ENCODE measurements at regions of chr1 and their contacts with region 1.

Region 1: DNA sequence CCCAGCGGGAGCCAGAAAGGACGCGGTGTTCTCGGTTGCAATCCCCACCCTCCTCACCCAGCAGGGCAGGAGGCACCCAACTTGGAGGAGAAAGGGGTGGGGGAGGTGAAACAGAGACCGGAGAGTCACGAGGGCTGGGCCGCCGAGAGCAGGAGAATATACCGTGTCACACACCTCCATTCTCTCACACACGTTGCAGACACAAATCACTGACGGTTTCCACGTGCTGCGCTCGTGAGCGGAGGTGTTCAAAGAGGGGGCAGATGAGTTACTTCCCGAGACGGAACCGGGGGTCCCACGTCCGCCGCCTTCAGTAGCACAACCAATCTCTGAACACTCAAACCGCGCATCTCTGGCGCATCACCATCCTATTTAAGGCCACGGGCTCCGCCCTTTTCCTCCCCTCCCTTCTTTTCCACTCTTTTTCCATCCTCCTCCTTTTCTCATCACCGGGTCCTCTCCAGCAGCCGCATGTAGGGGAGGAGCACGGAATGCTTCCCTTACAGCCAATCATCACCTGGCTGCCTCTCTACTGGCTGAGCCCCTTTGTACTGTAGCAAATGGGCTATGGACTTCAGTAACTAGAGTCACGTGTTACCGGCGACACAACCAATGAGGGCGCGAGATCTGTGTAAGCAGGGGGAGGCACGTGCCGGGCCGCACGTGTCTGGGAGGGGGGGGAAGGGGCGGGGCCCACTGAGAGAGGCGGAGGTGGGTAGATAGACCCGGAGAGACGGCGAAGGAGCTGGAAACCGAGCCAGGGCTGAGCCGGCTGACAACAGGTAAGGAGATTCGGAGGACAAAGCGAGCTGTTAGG is at the start of gene CIART:
- DNase-seq: peak; percentile 94
- ATAC-seq: peak; percentile 91
- H3K4me3 ChIP-seq: peak within 1 kb of the TSS; percentile 45 to 72
- H3K27ac ChIP-seq: peak within 1 kb of the TSS; percentile 88
- H3K4me1 ChIP-seq: 0 out of 2 replicates have a peak, but pooled peaks cover 4% of the 10 kb centered on the region
- H3K27me3 ChIP-seq: no peaks in the 10 kb centered on the region
- CTCF ChIP-seq: no peak
- total RNA-seq, gene CIART: 3.4 TPM

Region 2: GRCh38 chr1:150259758-150260669 is 22.0 kb before region 1 on chr1:
- CTCF ChIA-PET with region 1: interaction called, 14 read pairs
- POLR2A ChIA-PET with region 1: no interaction called
- in situ Hi-C with region 1: no loop called
- intact Hi-C with region 1: loop called (anchors 1 kb)
- DNase-seq: no peak
- ATAC-seq: no peak
- H3K4me3 ChIP-seq: no peak overlapping the region
- H3K27ac ChIP-seq: no peak overlapping the region
- H3K4me1 ChIP-seq: peaks cover 17% of the 10 kb centered on the region
- H3K27me3 ChIP-seq: no peaks in the 10 kb centered on the region
- CTCF ChIP-seq: no peak

Measured in Panc1 (cell line).